ENCODE measurements at regions of chr3 and their contacts with region 1.

Region 1: GRCh38 chr3:141311496-141312353 is 56.6 kb upstream of the ZBTB38 start:
- DNase-seq: peak; percentile 100
- H3K4me3 Mint-ChIP-seq: peak overlapping the region; percentile 81
- H3K27ac Mint-ChIP-seq: peak overlapping the region; percentile 69
- H3K4me1 Mint-ChIP-seq: peaks cover 39% of the 10 kb centered on the region
- H3K27me3 Mint-ChIP-seq: peaks cover 21% of the 10 kb centered on the region
- CTCF ChIP-seq: peak; percentile 82

Region 2: DNA sequence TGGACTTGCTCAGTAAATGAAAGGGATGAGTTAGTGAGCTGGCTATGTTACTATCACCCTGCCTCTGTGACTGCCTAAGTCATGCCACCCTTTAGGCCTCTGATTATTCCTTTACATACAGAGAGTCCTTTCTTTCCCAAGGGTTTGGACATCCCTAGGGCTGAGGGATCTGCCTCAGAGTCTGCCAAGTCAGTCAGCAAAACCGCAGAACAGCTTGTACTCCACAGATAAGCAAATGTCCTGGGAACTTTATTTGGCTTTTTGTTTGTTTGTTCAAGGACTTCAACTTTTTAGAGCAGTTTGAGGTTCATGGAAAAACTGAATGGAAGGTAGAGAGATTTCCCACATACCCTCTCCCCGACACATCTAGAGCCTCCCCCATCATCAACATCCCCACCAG is 716.4 kb before region 1 on chr3:
- CTCF ChIA-PET with region 1: no interaction called
- intact Hi-C with region 1: no loop called
- DNase-seq: no peak
- H3K4me3 Mint-ChIP-seq: no peak overlapping the region
- H3K27ac Mint-ChIP-seq: no peak overlapping the region
- H3K4me1 Mint-ChIP-seq: no peaks in the 10 kb centered on the region
- H3K27me3 Mint-ChIP-seq: peaks cover 35% of the 10 kb centered on the region
- CTCF ChIP-seq: no peak

Region 3: GRCh38 chr3:141326123-141326522 is 14.4 kb after region 1 on chr3:
- CTCF ChIA-PET with region 1: interaction called, 15 read pairs
- intact Hi-C with region 1: no loop called
- DNase-seq: no peak
- H3K4me3 Mint-ChIP-seq: peak overlapping the region; percentile 37
- H3K27ac Mint-ChIP-seq: peak overlapping the region; percentile 40
- H3K4me1 Mint-ChIP-seq: peaks cover 55% of the 10 kb centered on the region
- H3K27me3 Mint-ChIP-seq: no peaks in the 10 kb centered on the region
- CTCF ChIP-seq: no peak

Region 4: GRCh38 chr3:141360888-141361598 is 49.3 kb after region 1 on chr3:
- CTCF ChIA-PET with region 1: interaction called, 16 read pairs
- intact Hi-C with region 1: loop called (anchors 2 kb)
- DNase-seq: peak; percentile 69
- H3K4me3 Mint-ChIP-seq: peak overlapping the region; percentile 11
- H3K27ac Mint-ChIP-seq: peak overlapping the region; percentile 32
- H3K4me1 Mint-ChIP-seq: peaks cover 35% of the 10 kb centered on the region
- H3K27me3 Mint-ChIP-seq: no peaks in the 10 kb centered on the region
- CTCF ChIP-seq: peak; percentile 86

Region 5: GRCh38 chr3:141441381-141442364 is 129.9 kb after region 1 on chr3:
- CTCF ChIA-PET with region 1: interaction called, 15 read pairs
- intact Hi-C with region 1: loop called (anchors 1 kb)
- DNase-seq: peak; percentile 94
- H3K4me3 Mint-ChIP-seq: no peak overlapping the region
- H3K27ac Mint-ChIP-seq: peak overlapping the region; percentile 52
- H3K4me1 Mint-ChIP-seq: peaks cover 36% of the 10 kb centered on the region
- H3K27me3 Mint-ChIP-seq: no peaks in the 10 kb centered on the region
- CTCF ChIP-seq: peak; percentile 98

Measured in Calu3 (cell line).